ENCODE measurements at regions of chr7 and their contacts with region 1.

Region 1: GRCh38 chr7:8197994-8198698 is 63.8 kb downstream of the ICA1 start:
- DNase-seq: peak; percentile 92
- ATAC-seq: peak; percentile 95
- H3K4me3 Mint-ChIP-seq: peak overlapping the region; percentile 20
- H3K27ac Mint-ChIP-seq: peak overlapping the region; percentile 62
- H3K4me1 Mint-ChIP-seq: peaks cover 70% of the 10 kb centered on the region
- H3K27me3 Mint-ChIP-seq: peaks cover 17% of the 10 kb centered on the region

Region 2: DNA sequence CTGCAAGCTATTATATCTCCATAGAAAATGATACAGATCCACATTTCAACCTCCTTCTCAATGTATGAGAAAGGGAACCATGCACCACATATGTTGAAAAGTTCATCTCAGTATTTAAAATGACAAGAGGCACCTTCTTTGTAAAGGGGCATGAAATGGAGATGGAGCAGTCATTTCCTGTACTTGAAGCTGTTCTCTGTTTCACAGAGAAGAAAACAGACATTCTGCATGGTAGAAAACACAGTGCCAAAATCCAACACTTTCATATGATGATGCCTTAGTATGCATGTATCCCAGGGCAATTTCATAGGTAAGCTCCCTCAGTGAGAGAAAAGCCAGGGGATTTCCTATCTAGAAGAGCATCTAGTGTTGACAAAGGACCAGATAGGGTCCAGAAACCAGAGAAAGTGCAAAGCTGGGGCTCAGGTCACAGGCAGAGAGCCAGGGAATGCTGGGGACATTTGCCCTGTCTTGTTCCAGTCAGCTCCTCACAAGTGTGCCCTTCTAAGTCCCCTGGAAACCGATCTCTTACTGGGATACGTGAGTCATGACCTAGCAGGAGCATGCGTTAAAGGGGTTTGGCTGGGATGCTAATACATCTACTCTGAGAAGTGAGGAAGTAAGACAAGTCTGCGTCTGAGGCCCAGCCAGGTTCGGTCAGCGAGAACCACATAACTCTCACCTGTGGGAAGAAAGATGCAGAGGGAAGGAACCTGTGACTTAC is 54.8 kb before region 1 on chr7:
- CTCF ChIA-PET with region 1: no interaction called
- DNase-seq: no peak
- ATAC-seq: peak; percentile 36
- H3K4me3 Mint-ChIP-seq: no peak overlapping the region
- H3K27ac Mint-ChIP-seq: no peak overlapping the region
- H3K4me1 Mint-ChIP-seq: peaks cover 12% of the 10 kb centered on the region
- H3K27me3 Mint-ChIP-seq: no peaks in the 10 kb centered on the region

Region 3: GRCh38 chr7:8176370-8177081 is 21.6 kb before region 1 on chr7:
- CTCF ChIA-PET with region 1: interaction called, 11 read pairs
- DNase-seq: peak; percentile 89
- ATAC-seq: peak; percentile 91
- H3K4me3 Mint-ChIP-seq: peak overlapping the region; percentile 58
- H3K27ac Mint-ChIP-seq: peak overlapping the region; percentile 97
- H3K4me1 Mint-ChIP-seq: peaks cover 51% of the 10 kb centered on the region
- H3K27me3 Mint-ChIP-seq: no peaks in the 10 kb centered on the region

Region 4: GRCh38 chr7:8217200-8218068 is 19.3 kb after region 1 on chr7:
- CTCF ChIA-PET with region 1: interaction called, 10 read pairs
- DNase-seq: no peak
- ATAC-seq: peak; percentile 75
- H3K4me3 Mint-ChIP-seq: no peak overlapping the region
- H3K27ac Mint-ChIP-seq: no peak overlapping the region
- H3K4me1 Mint-ChIP-seq: peaks cover 6% of the 10 kb centered on the region
- H3K27me3 Mint-ChIP-seq: no peaks in the 10 kb centered on the region

Measured in activated CD8-positive, alpha-beta memory T cell treated with anti-CD3 and anti-CD28 coated beads, Interleukin-2, amount 10 ng/mL, durations not matched to agents 7 days and 5 days (primary cell).